Activated CD4-positive, alpha-beta memory T cell treated with anti-CD3 and anti-CD28 coated beads, Interleukin-2, amount 10 ng/mL, durations not matched to agents 7 days and 5 days (primary cell): ENCODE measurements at regions of chr9 and their contacts with region 1.

Region 1: GRCh38 chr9:35111001-35111933 is 4.4 kb downstream of the ATOSB start:
- DNase-seq: peak; percentile 97
- H3K4me3 Mint-ChIP-seq: peak overlapping the region; percentile 73
- H3K27ac Mint-ChIP-seq: peak overlapping the region; percentile 79
- H3K4me1 Mint-ChIP-seq: peaks cover 54% of the 10 kb centered on the region
- H3K27me3 Mint-ChIP-seq: no peaks in the 10 kb centered on the region

Region 2: GRCh38 chr9:35096035-35096849 is 15.0 kb before region 1 on chr9 and contains the start of gene PIGO:
- CTCF ChIA-PET with region 1: interaction called, 21 read pairs
- POLR2A ChIA-PET with region 1: interaction called, 39 read pairs
- DNase-seq: peak; percentile 89
- H3K4me3 Mint-ChIP-seq: peak within 1 kb of the TSS; percentile 82
- H3K27ac Mint-ChIP-seq: peak within 1 kb of the TSS; percentile 86
- H3K4me1 Mint-ChIP-seq: peaks cover 44% of the 10 kb centered on the region
- H3K27me3 Mint-ChIP-seq: no peaks in the 10 kb centered on the region
- total RNA-seq, gene PIGO: 22.8 to 28.6 TPM